H1 (cell line): ENCODE measurements at regions of chr7 and their contacts with region 1.

Region 1: DNA sequence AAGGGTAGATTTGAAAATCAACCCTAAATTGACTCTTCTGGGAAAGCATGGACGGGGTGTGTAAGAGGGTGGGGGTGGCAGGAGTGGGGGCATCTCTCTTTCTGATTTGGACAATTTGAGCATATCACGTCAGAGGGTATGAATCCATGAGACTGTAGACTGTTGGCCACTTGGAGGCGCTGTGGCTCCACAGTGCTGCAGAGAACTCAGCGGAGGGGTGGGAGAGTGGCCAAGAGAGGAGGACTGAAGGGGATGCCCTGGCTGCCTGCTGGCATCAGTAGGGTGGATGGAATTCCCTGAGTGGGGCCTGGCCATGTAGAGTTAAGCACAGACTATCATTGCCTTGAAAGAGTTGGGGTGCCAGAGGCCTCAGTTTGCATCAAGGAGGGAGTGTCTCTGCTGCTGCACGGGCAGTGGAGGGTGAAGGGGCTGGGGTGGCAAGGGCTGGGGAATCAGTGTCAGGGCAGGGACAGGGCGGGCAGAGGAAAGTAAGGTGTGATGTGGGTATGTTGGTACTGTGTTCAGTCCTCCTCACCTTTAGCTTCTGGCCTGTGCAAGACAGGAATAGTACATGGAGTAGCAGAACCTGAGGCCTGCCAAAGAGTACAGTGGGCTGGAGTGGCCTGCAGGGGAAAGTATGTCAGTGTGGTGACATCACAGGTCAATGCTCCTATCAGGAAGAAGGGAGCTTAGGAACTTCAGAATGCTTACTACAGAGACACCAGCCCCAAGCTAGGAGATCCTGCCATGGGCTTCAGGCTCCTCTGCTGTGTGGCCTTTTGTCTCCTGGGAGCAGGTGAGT is 133.5 kb upstream of the PRSS58 start:
- DNase-seq: peak; percentile 38 to 88
- H3K4me3 ChIP-seq: no peak overlapping the region
- H3K27ac ChIP-seq: no peak overlapping the region
- H3K4me1 ChIP-seq: no peaks in the 10 kb centered on the region; a peak in 1 of 7 replicates
- H3K27me3 ChIP-seq: no peaks in the 10 kb centered on the region
- CTCF ChIP-seq: peak; percentile 90 to 93 (median 90)
- EP300 ChIP-seq: no peak
- POLR2A ChIP-seq: no peak
- RAD21 ChIP-seq: peak; percentile 90 to 91

Region 2: DNA sequence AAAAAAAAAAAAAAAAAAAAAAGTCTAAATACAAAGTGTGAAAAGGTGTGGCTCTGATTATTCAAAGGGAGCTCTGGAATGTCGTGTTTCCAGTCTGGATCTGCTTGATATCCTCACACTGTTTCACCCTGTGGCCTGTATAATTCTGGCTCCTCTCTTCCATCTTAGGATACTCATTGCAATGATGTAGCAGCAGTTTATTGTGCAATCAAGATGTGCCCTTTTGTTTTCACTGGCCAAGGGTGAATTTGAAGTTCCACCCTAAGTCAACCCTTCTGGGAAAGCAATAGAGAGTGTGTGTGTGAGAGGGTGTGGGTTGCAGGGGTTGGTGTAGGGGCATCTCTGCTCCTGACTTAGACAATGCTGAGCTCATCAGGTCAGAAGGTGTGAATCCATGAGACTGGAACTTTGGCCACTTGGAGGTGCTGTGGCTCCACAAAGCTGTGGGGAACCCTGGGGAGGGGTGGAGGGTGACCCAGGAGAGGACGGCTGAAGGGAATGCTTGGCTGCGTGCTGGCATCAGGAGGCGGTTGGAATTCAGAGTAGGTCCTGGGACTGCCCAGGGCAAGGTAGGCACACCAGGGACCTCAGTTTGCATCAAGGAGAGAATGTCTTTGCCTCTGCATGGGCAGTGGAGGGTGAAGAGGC is 15.6 kb before region 1 on chr7:
- CTCF ChIA-PET with region 1: interaction called, 80 read pairs
- POLR2A ChIA-PET with region 1: no interaction called
- DNase-seq: peak; percentile 43 to 83
- H3K4me3 ChIP-seq: no peak overlapping the region
- H3K27ac ChIP-seq: no peak overlapping the region
- H3K4me1 ChIP-seq: peaks cover 0 to 14% (median 5%) of the 10 kb centered on the region in 4 experiments; a peak in 6 of 7 replicates
- H3K27me3 ChIP-seq: no peaks in the 10 kb centered on the region
- CTCF ChIP-seq: peak; percentile 72 to 87 (median 85)
- EP300 ChIP-seq: no peak
- POLR2A ChIP-seq: no peak
- RAD21 ChIP-seq: peak; percentile 77 to 86

Region 3: GRCh38 chr7:142412551-142413193 is 21.3 kb after region 1 on chr7:
- CTCF ChIA-PET with region 1: interaction called, 32 read pairs
- POLR2A ChIA-PET with region 1: no interaction called
- DNase-seq: peak; percentile 36 to 55
- H3K4me3 ChIP-seq: no peak overlapping the region
- H3K27ac ChIP-seq: no peak overlapping the region
- H3K4me1 ChIP-seq: peaks cover 0 to 3% (median 0%) of the 10 kb centered on the region in 4 experiments; a peak in 2 of 7 replicates
- H3K27me3 ChIP-seq: no peaks in the 10 kb centered on the region
- CTCF ChIP-seq: peak; percentile 78 to 96 (median 84)
- EP300 ChIP-seq: no peak
- POLR2A ChIP-seq: no peak
- RAD21 ChIP-seq: peak; percentile 56 to 70